ENCODE measurements at regions of chr2 and their contacts with region 1.

Region 1: DNA sequence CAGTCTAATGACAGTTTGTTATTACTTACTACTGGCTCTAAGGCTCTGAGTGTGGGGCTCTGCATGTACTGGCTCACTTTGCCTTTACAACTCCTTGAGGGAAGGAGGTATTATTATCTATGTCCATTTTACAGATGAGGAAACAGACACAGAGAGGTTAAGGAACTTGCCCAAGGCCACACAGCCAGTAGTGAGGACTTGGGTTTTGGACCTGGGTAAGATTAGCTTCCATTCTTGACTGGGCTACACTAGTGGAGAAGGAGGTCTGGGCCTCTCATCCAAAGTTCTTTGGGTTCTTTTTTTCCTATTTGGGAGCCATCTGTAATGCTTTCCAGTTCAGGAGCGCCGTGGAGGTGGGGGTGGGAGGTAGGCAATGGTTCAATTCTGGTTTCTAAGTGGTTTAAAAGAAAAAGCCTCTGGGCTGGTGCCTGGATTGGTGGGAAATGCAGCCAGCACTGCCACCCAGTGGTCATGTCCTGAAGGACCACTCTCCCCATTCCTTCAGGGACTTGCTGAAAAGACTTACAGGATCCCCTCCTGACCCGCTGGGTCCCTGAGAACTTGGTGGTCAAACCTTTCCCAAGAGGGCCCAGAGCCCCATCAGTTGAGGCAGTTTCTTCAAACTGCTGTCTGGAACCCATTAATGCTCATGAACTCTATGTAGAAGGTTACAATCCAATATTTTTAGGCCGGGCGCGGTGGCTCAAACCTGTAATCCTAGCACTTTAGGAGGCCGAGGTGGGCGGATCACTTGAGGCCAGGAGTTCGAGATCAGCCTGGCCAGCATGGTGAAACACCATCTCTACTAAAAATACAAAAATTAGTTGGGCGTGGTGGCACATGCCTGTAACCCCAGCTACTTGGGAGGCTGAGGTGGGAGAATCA is 38.6 kb upstream of the NOTO start:
- DNase-seq: peak; percentile 74
- ATAC-seq: peak; percentile 98
- H3K4me3 ChIP-seq: no peak overlapping the region
- H3K27ac ChIP-seq: no peak overlapping the region
- H3K4me1 ChIP-seq: no peaks in the 10 kb centered on the region
- H3K27me3 ChIP-seq: peaks cover 21% of the 10 kb centered on the region
- CTCF ChIP-seq: peak; percentile 94
- POLR2A ChIP-seq: 0 out of 2 replicates have a peak, but pooled peaks have one; percentile 25
- RAD21 ChIP-seq: peak; percentile 95

Region 2: GRCh38 chr2:73260034-73260984 is 96.6 kb after region 1 on chr2:
- CTCF ChIA-PET with region 1: no interaction called
- POLR2A ChIA-PET with region 1: no interaction called
- dilution Hi-C with region 1: no loop called
- in situ Hi-C with region 1: no loop called
- intact Hi-C with region 1: loop called (anchors 5 kb)
- DNase-seq: peak; percentile 43
- ATAC-seq: peak; percentile 84
- H3K4me3 ChIP-seq: no peak overlapping the region
- H3K27ac ChIP-seq: no peak overlapping the region
- H3K4me1 ChIP-seq: no peaks in the 10 kb centered on the region
- H3K27me3 ChIP-seq: no peaks in the 10 kb centered on the region
- CTCF ChIP-seq: peak; percentile 45
- POLR2A ChIP-seq: no peak
- RAD21 ChIP-seq: peak; percentile 46

Region 3: GRCh38 chr2:73736855-73737779 is 573.4 kb after region 1 on chr2 and contains the start of gene TPRKB:
- CTCF ChIA-PET with region 1: no interaction called
- POLR2A ChIA-PET with region 1: no interaction called
- dilution Hi-C with region 1: no loop called
- in situ Hi-C with region 1: no loop called
- intact Hi-C with region 1: no loop called
- DNase-seq: peak; percentile 97
- ATAC-seq: peak; percentile 98
- H3K4me3 ChIP-seq: peak within 1 kb of the TSS; percentile 74
- H3K27ac ChIP-seq: peak within 1 kb of the TSS; percentile 26
- H3K4me1 ChIP-seq: no peaks in the 10 kb centered on the region
- H3K27me3 ChIP-seq: no peaks in the 10 kb centered on the region
- CTCF ChIP-seq: no peak
- POLR2A ChIP-seq: 0 out of 2 replicates have a peak, but pooled peaks have one; percentile 48
- RAD21 ChIP-seq: no peak
- total RNA-seq, gene TPRKB: 37.6 and 52.2 TPM in 2 replicates